MCF 10A (cell line): ENCODE measurements at regions of chr4 and their contacts with region 1.

Region 1: DNA sequence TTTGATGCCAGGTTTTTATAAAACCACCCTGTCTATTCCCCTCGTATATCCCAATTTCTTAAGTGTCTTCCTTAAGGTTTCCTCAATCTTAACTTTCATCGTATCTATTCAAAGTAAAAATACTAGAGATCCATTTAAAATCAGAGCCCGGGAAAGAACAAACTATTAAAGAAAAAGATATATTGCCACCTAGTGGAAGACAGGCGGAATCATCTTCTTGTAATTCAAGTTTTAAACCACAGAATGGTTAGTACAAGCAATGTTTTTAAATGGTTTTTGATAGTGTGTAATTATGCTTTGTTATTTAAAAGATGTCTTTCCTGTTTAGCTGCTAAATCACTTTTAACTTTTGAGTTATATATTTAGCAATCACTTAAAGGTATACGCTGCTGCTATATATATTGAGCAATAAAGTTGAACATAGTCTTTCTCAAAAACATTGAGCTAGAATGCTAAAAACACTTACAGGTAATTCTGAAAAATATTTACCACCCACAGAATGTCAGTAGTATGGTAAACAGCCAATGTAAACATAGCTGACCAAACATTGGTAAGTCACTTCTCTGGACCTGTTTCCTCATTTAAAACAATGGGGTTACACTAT is 18.2 kb downstream of the PRDM8 start:
- DNase-seq: peak; percentile 39
- H3K4me3 Mint-ChIP-seq: no peak overlapping the region
- H3K27ac Mint-ChIP-seq: no peak overlapping the region
- H3K4me1 Mint-ChIP-seq: peaks cover 15% of the 10 kb centered on the region
- H3K27me3 Mint-ChIP-seq: no peaks in the 10 kb centered on the region
- CTCF ChIP-seq: peak; percentile 44

Region 2: DNA sequence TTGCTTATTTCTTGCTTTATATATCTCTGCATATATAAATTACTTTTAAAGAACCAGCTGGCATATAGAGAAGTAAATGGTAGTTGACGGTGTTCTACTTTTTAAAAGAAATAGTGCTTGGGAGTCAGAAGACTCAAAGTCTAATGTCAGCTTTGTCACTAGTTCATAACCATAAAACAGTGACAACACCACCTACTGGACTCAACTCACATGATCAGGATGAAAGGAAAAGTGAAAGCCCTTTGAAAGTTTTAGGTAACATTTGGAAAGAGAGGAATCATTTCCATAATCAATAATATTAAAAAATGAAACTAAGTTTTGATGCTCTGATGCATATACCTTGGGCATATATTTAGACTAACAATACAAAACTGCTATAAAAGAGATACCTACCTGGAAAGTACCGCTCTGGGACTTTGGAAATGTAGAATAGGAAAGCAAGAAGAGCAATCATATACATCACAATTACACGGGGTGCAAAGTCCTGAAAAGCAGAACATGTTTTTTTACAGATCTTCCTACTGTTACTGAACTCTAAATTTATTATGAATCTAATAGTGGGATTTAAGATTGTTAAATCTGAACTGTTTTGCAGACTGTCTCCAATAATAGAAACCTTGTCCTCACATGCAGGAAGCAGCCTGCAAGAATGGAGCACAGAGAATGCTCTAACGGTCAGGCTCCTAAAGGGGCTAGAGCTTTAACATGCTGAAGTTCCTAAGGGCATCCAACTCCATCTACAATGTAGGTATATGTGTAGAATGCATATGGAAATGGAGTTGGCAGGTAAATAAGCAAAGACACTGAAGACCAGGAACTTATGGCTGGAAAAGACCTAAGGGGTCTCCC is 1291.9 kb before region 1 on chr4:
- CTCF ChIA-PET with region 1: no interaction called
- POLR2A ChIA-PET with region 1: no interaction called
- intact Hi-C with region 1: no loop called
- DNase-seq: no peak
- H3K4me3 Mint-ChIP-seq: no peak overlapping the region
- H3K27ac Mint-ChIP-seq: peak overlapping the region; percentile 31
- H3K4me1 Mint-ChIP-seq: no peaks in the 10 kb centered on the region
- H3K27me3 Mint-ChIP-seq: no peaks in the 10 kb centered on the region
- CTCF ChIP-seq: no peak

Region 3: GRCh38 chr4:79042079-79042674 is 1173.4 kb before region 1 on chr4:
- CTCF ChIA-PET with region 1: interaction called, 6 read pairs
- POLR2A ChIA-PET with region 1: no interaction called
- intact Hi-C with region 1: loop called (anchors 1 kb)
- DNase-seq: peak; percentile 59
- H3K4me3 Mint-ChIP-seq: no peak overlapping the region
- H3K27ac Mint-ChIP-seq: no peak overlapping the region
- H3K4me1 Mint-ChIP-seq: no peaks in the 10 kb centered on the region
- H3K27me3 Mint-ChIP-seq: no peaks in the 10 kb centered on the region
- CTCF ChIP-seq: peak; percentile 56

Region 4: GRCh38 chr4:79917246-79917645 is 298.3 kb before region 1 on chr4:
- CTCF ChIA-PET with region 1: interaction called, 4 read pairs
- POLR2A ChIA-PET with region 1: no interaction called
- intact Hi-C with region 1: loop called (anchors 2 kb)
- DNase-seq: peak; percentile 53
- H3K4me3 Mint-ChIP-seq: no peak overlapping the region
- H3K27ac Mint-ChIP-seq: no peak overlapping the region
- H3K4me1 Mint-ChIP-seq: no peaks in the 10 kb centered on the region
- H3K27me3 Mint-ChIP-seq: no peaks in the 10 kb centered on the region
- CTCF ChIP-seq: peak; percentile 56